Activated CD4-positive, alpha-beta T cell treated with anti-CD3 and anti-CD28 coated beads for 36 hours (primary cell): ENCODE measurements at regions of chr3 and their contacts with region 1.

Region 1: GRCh38 chr3:136171097-136171542 is 25.0 kb downstream of the MSL2 start:
- DNase-seq: peak; percentile 41
- ATAC-seq: peak; percentile 92
- H3K4me3 Mint-ChIP-seq: no peak overlapping the region
- H3K27ac Mint-ChIP-seq: no peak overlapping the region
- H3K4me1 Mint-ChIP-seq: peaks cover 39% of the 10 kb centered on the region
- H3K27me3 Mint-ChIP-seq: no peaks in the 10 kb centered on the region

Region 2: DNA sequence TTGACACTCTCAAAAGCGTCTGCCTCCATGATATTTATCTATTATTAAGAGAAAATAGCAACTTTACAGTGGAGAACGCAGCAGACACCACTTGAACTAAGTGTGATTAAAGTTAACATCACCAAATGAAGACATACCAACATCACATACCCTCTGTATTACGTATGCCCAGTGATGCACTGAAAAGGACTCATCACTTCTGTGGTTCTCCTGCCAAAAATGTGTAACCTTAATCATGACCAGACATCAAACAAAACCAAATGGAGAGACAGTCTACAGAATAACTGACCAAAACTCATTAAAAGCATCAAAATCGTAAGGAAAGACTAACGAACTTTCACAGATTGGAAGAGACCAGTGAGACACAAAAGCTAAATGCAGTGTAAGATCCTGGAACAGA is 102.4 kb before region 1 on chr3:
- CTCF ChIA-PET with region 1: no interaction called
- POLR2A ChIA-PET with region 1: no interaction called
- intact Hi-C with region 1: no loop called
- DNase-seq: no peak
- ATAC-seq: no peak
- H3K4me3 Mint-ChIP-seq: no peak overlapping the region
- H3K27ac Mint-ChIP-seq: no peak overlapping the region
- H3K4me1 Mint-ChIP-seq: no peaks in the 10 kb centered on the region
- H3K27me3 Mint-ChIP-seq: no peaks in the 10 kb centered on the region

Region 3: GRCh38 chr3:136186344-136186743 is 15.2 kb after region 1 on chr3:
- CTCF ChIA-PET with region 1: interaction called, 5 read pairs
- POLR2A ChIA-PET with region 1: interaction called, 4 read pairs
- intact Hi-C with region 1: loop called in 1 of 2 experiments (anchors 1 kb)
- DNase-seq: peak; percentile 32
- ATAC-seq: peak; percentile 34
- H3K4me3 Mint-ChIP-seq: no peak overlapping the region
- H3K27ac Mint-ChIP-seq: peak overlapping the region; percentile 34
- H3K4me1 Mint-ChIP-seq: peaks cover 91% of the 10 kb centered on the region
- H3K27me3 Mint-ChIP-seq: no peaks in the 10 kb centered on the region

Region 4: DNA sequence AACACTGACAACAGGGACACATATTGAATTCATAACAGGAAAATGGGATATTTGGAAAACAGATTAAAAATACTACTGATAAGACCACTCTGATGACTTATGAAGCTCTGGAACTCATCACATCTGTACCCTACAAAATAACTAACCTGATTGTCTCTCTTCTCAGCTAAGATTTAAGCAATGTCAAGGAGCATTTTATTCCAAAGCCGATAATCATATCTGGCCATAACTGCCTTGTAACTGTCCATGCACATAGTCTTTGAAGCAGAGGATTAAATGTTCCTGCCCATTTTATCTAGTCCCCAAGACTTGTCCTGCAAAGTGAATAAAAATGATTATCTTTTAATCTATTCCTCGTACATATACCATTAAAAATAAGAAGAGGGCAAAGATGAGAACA is 347.0 kb after region 1 on chr3:
- CTCF ChIA-PET with region 1: no interaction called
- POLR2A ChIA-PET with region 1: no interaction called
- intact Hi-C with region 1: no loop called
- DNase-seq: no peak
- ATAC-seq: no peak
- H3K4me3 Mint-ChIP-seq: no peak overlapping the region
- H3K27ac Mint-ChIP-seq: no peak overlapping the region
- H3K4me1 Mint-ChIP-seq: peaks cover 1% of the 10 kb centered on the region
- H3K27me3 Mint-ChIP-seq: no peaks in the 10 kb centered on the region